Right ventricle myocardium superior (tissue), 1 donor: ENCODE measurements at regions of chr1 and their contacts with region 1.

Region 1: GRCh38 chr1:65209005-65209885 is 61.2 kb downstream of the AK4 start:
- DNase-seq: no peak
- ATAC-seq: peak; percentile 78

Region 2: DNA sequence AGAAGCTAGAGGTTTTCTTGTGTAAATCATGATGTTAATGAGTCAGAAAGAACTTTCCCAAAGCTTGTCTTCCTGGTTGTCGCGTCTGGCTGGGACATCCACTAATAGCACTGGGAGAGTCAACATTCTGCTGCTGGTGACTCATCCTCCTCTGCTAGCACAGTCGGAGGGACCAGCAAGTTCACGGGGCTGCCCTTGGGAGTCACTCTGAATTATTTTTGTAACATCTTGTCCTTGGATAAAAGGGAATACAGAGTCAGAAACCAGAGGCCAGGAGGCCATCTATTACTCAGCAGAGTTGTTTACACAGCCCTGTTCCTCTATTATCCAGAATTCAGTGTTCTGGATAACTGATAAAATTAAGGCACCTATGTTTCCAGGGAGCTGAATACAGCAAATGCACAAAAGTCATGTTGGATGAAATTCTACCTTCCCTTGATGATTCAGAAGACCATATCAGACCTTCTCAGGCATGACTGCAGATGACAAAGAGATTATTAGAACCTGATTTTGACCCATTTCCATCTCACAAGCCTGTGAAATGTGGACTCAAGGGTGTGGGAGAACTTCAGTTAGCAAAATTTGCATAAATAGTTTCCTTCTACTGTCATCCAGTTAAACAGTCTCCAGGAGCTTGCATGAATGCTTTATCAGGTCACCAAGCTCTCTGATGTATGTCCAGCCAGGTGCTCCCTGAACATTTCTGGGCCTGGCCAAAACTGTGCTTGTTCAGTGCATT is 311.0 kb before region 1 on chr1:
- intact Hi-C with region 1: no loop called
- DNase-seq: peak; percentile 85
- ATAC-seq: peak; percentile 96

Region 3: GRCh38 chr1:65067491-65068201 is 141.6 kb before region 1 on chr1:
- intact Hi-C with region 1: loop called (anchors 5 kb)
- DNase-seq: peak; percentile 79
- ATAC-seq: peak; percentile 40

Region 4: DNA sequence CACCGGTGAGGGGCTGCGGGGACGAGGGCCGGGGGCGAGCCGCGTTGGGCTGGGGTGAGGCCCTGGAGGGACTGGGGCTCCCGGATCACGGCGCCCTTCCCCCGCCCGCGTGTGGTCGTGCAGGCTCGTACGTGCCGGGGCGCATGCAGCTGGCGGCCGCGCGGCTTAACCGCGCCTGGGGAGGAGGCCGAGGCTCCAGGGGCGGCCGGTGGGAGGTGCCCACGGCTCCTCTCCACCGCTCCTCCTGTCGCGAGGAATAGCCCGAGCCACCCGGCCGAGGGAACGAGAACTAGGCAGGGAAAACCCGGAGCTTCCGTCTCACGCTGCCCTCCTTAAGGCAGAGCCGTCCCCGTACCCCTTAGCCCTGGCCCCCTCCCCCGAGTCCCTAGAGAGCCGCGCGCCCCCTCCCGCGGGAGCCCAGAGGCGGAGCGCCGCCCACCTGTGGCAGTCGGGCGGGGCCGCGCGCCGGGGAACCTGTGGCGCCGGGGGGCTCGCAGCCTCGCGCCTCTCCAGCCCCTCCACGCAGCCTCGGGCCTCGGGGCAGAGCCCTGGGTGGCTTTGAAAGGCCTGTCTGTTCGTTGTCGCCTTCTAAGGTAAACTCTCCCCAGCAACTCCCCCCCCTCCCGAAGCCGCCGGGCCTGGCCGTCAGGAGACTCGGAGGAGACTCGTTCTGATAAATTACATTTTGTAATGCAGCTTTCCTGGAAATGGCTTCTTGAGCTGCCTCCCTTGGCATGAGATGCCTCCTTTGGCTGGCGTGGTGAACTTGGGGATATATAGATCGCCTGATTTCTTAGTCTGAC is 60.5 kb before region 1 on chr1:
- intact Hi-C with region 1: loop called (anchors 5 kb)
- DNase-seq: peak; percentile 74
- ATAC-seq: peak; percentile 83